Mammary epithelial cell (primary cell): ENCODE measurements at regions of chr20 and their contacts with region 1.

Region 1: GRCh38 chr20:7113577-7114466 is 346.3 kb downstream of the BMP2 start:
- DNase-seq: peak; percentile 43
- H3K4me3 ChIP-seq: no peak overlapping the region
- H3K27ac ChIP-seq: no peak overlapping the region
- H3K4me1 ChIP-seq: no peaks in the 10 kb centered on the region
- H3K27me3 ChIP-seq: no peaks in the 10 kb centered on the region
- CTCF ChIP-seq: peak; percentile 52 to 76

Region 2: GRCh38 chr20:6673071-6673470 is 440.8 kb before region 1 on chr20:
- CTCF ChIA-PET with region 1: no interaction called
- dilution Hi-C with region 1: no loop called
- in situ Hi-C with region 1: no loop called
- intact Hi-C with region 1: no loop called
- DNase-seq: no peak
- H3K4me3 ChIP-seq: no peak overlapping the region
- H3K27ac ChIP-seq: no peak overlapping the region
- H3K4me1 ChIP-seq: no peaks in the 10 kb centered on the region
- H3K27me3 ChIP-seq: no peaks in the 10 kb centered on the region
- CTCF ChIP-seq: no peak

Region 3: GRCh38 chr20:7161690-7162089 is 47.9 kb after region 1 on chr20:
- CTCF ChIA-PET with region 1: no interaction called
- dilution Hi-C with region 1: no loop called
- in situ Hi-C with region 1: no loop called
- intact Hi-C with region 1: loop called (anchors 5 kb)
- DNase-seq: peak; percentile 25
- H3K4me3 ChIP-seq: no peak overlapping the region
- H3K27ac ChIP-seq: no peak overlapping the region
- H3K4me1 ChIP-seq: peaks cover 3% of the 10 kb centered on the region
- H3K27me3 ChIP-seq: no peaks in the 10 kb centered on the region
- CTCF ChIP-seq: peak; percentile 65 to 68

Region 4: DNA sequence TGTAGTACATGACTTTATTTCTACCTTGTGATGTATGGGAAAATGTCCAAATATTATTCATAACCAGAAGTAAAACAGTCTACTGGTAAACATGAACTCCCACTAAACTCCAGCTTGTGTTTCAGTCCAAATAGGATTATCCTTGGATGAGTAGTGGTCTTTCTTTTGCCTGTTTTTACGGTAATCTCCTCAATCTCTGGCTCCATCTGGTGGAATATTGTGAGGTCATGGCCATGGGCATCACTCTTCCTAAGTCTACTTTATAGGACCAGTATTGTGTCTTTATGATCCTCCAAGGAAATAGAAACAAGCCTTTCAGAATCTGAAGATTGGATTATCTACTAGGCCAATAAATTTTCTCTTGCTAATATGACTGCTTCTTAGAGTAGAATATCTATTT is 158.7 kb after region 1 on chr20:
- CTCF ChIA-PET with region 1: no interaction called
- dilution Hi-C with region 1: no loop called
- in situ Hi-C with region 1: no loop called
- intact Hi-C with region 1: loop called (anchors 5 kb)
- DNase-seq: no peak
- H3K4me3 ChIP-seq: no peak overlapping the region
- H3K27ac ChIP-seq: no peak overlapping the region
- H3K4me1 ChIP-seq: no peaks in the 10 kb centered on the region
- H3K27me3 ChIP-seq: no peaks in the 10 kb centered on the region
- CTCF ChIP-seq: peak; percentile 10 to 44

Region 5: GRCh38 chr20:7285918-7286556 is 172.2 kb after region 1 on chr20:
- CTCF ChIA-PET with region 1: no interaction called
- dilution Hi-C with region 1: no loop called
- in situ Hi-C with region 1: no loop called
- intact Hi-C with region 1: loop called (anchors 5 kb)
- DNase-seq: peak; percentile 71
- H3K4me3 ChIP-seq: no peak overlapping the region
- H3K27ac ChIP-seq: no peak overlapping the region
- H3K4me1 ChIP-seq: no peaks in the 10 kb centered on the region
- H3K27me3 ChIP-seq: no peaks in the 10 kb centered on the region
- CTCF ChIP-seq: peak; percentile 92 to 93